ENCODE measurements at regions of chr4 and their contacts with region 1.

Region 1: DNA sequence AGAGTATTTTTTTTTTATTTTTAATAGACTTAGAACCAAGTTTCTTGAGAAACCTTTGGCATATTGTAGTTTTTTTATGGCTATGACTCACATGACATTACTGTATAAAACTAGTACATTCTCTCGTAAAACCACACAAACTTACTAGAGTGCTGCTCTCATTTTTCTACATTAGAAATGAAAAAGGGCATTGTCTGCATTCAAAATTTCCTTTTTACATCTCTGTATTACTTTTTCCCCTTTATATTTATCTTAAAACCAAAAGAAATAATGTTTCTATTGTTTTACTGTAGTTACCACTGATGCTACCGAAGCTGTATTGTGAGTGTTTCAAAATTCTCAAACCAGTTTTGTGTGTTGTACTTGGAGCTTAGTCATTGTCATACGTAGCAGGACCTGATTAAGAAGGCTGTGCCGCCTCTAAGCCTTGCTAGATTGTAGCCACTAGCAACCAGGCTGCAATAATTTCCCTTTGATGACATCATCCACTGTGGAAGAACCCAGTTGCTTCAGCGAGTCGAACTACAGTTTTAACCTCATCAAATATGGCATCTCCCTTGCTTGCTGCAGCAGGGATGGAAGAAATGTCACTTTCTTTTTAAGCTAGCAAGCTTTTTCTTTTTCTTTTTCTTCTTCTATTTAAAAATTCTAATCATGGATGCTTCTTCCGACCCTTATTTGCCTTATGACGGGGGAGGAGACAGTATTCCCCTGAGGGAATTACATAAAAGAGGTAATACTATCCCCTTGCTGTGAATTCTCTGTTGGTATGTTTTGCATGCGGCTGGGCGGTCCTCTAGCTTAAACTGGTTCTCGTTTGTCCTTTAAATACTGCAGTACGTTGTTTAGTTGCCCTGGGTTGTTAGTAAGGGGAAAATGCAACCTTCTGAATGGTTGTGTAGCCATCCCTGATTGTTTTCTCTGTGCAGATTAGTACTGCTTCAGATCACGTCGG is 39.6 kb downstream of the CLCN3 start:
- DNase-seq: peak; percentile 74
- ATAC-seq: peak; percentile 98
- H3K4me3 ChIP-seq: peak overlapping the region; percentile 56
- H3K27ac ChIP-seq: peak overlapping the region; percentile 78
- H3K4me1 ChIP-seq: peaks cover 3% of the 10 kb centered on the region
- H3K27me3 ChIP-seq: no peaks in the 10 kb centered on the region
- CTCF ChIP-seq: no peak
- EP300 ChIP-seq: no peak
- POLR2A ChIP-seq: 0 out of 2 replicates have a peak, but pooled peaks have one; percentile 36
- RAD21 ChIP-seq: no peak

Region 2: GRCh38 chr4:169619959-169620879 is 39.8 kb before region 1 on chr4 and contains the start of gene CLCN3:
- CTCF ChIA-PET with region 1: interaction called, 25 read pairs
- POLR2A ChIA-PET with region 1: interaction called, 26 read pairs
- RAD21 ChIA-PET with region 1: interaction called, 34 read pairs
- SMC1A ChIA-PET with region 1: interaction called, 28 read pairs
- in situ Hi-C with region 1: no loop called
- intact Hi-C with region 1: loop called (anchors 2 kb)
- DNase-seq: peak; percentile 93
- ATAC-seq: peak; percentile 93
- H3K4me3 ChIP-seq: peak within 1 kb of the TSS; percentile 90
- H3K27ac ChIP-seq: peak within 1 kb of the TSS; percentile 99
- H3K4me1 ChIP-seq: peaks cover 5% of the 10 kb centered on the region; the same call in 1 of the 2 replicates
- H3K27me3 ChIP-seq: no peaks in the 10 kb centered on the region
- CTCF ChIP-seq: no peak
- EP300 ChIP-seq: peak in 1 of 2 experiments; percentile 78; a peak in 3 of 4 replicates
- POLR2A ChIP-seq: peak; percentile 94
- RAD21 ChIP-seq: no peak
- polyA plus RNA-seq, gene CLCN3: 4.0 to 4.7 TPM

Region 3: DNA sequence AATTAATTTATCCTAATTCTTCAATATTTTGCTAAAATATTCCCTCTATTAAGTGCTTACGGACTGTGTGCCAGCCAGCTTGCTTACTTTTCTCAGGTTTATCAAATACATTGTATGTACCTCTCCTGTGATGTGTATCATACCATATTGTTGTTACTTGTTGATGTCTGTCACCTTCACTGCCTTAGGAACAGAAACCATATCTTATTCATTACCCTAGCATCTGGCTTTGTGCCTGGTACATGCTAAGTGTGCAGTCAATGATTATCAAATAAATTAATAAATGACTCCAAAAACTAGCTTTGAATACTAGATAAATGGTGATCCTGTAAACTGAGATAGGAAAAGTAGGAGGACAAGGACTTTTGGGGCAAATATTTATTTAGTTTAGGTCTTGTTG is 32.7 kb before region 1 on chr4:
- CTCF ChIA-PET with region 1: interaction called, 4 read pairs
- POLR2A ChIA-PET with region 1: interaction called, 26 read pairs
- RAD21 ChIA-PET with region 1: interaction called, 34 read pairs
- SMC1A ChIA-PET with region 1: interaction called, 28 read pairs
- in situ Hi-C with region 1: no loop called
- intact Hi-C with region 1: no loop called
- DNase-seq: no peak
- ATAC-seq: peak; percentile 45
- H3K4me3 ChIP-seq: no peak overlapping the region
- H3K27ac ChIP-seq: no peak overlapping the region
- H3K4me1 ChIP-seq: no peaks in the 10 kb centered on the region
- H3K27me3 ChIP-seq: no peaks in the 10 kb centered on the region
- CTCF ChIP-seq: no peak
- EP300 ChIP-seq: no peak
- POLR2A ChIP-seq: no peak
- RAD21 ChIP-seq: no peak

Region 4: GRCh38 chr4:169675825-169676224 is 15.8 kb after region 1 on chr4:
- CTCF ChIA-PET with region 1: interaction called, 5 read pairs
- POLR2A ChIA-PET with region 1: interaction called, 10 read pairs
- RAD21 ChIA-PET with region 1: interaction called, 35 read pairs
- SMC1A ChIA-PET with region 1: interaction called, 29 read pairs
- in situ Hi-C with region 1: no loop called
- intact Hi-C with region 1: no loop called
- DNase-seq: no peak
- ATAC-seq: peak; percentile 88
- H3K4me3 ChIP-seq: no peak overlapping the region
- H3K27ac ChIP-seq: no peak overlapping the region
- H3K4me1 ChIP-seq: no peaks in the 10 kb centered on the region
- H3K27me3 ChIP-seq: no peaks in the 10 kb centered on the region
- CTCF ChIP-seq: no peak
- EP300 ChIP-seq: no peak
- POLR2A ChIP-seq: no peak
- RAD21 ChIP-seq: no peak

Region 5: DNA sequence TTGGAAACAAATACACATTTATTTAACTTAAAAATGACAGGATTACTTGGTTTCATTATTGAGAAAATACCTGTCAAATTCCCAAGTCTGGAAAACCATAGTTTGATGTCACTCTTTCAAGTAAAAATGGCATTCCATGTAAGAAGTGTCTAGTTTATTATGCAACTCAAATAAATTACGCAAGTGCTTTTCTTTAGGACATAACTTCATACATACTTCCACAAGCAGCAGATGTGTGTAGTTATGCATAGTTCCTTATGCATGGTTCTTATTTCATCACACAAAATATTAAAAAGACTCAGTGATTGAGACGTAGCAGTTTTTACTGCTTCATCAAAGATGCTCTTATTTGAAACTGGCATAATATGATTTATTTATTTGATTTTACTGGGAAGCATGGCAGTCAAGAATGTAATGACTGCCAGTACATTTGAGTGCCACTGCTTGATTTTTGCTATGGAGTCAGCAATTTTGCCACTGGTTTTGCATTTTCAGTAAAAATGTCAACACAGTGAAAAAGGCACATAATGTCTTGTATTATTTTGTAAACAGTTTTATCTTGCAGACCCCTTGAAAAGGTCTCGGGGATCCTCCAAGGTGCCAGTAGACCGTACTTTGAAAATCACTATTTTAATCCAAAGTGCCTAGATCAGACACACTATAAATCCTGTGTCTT is 22.5 kb after region 1 on chr4:
- CTCF ChIA-PET with region 1: interaction called, 3 read pairs
- POLR2A ChIA-PET with region 1: interaction called, 10 read pairs
- RAD21 ChIA-PET with region 1: interaction called, 35 read pairs
- SMC1A ChIA-PET with region 1: interaction called, 11 read pairs
- in situ Hi-C with region 1: no loop called
- intact Hi-C with region 1: no loop called
- DNase-seq: no peak
- ATAC-seq: no peak
- H3K4me3 ChIP-seq: no peak overlapping the region
- H3K27ac ChIP-seq: no peak overlapping the region
- H3K4me1 ChIP-seq: no peaks in the 10 kb centered on the region
- H3K27me3 ChIP-seq: no peaks in the 10 kb centered on the region
- CTCF ChIP-seq: no peak
- EP300 ChIP-seq: no peak
- POLR2A ChIP-seq: no peak
- RAD21 ChIP-seq: no peak

Region 6: DNA sequence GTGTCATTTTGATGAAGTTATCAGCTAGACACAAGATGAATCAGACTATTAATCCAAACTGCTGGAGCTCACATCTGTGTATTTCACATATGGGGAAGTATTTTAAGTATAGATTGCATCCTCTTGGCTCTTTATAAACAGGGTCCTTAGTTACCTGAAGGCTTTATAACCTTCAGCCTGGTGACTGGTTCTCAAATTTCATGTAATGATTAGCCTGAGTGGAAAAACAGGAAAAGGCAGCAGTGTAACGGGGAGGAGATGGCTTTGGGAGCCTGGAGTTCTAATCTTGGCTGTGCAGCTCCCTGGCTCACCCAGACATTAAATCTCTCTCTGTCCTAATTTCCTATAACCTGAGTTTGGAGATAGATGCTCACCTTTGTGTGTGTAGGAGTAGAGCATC is 201.6 kb after region 1 on chr4:
- CTCF ChIA-PET with region 1: no interaction called
- POLR2A ChIA-PET with region 1: no interaction called
- RAD21 ChIA-PET with region 1: no interaction called
- SMC1A ChIA-PET with region 1: no interaction called
- in situ Hi-C with region 1: no loop called
- intact Hi-C with region 1: no loop called
- DNase-seq: no peak
- ATAC-seq: no peak
- H3K4me3 ChIP-seq: no peak overlapping the region
- H3K27ac ChIP-seq: no peak overlapping the region
- H3K4me1 ChIP-seq: no peaks in the 10 kb centered on the region
- H3K27me3 ChIP-seq: no peaks in the 10 kb centered on the region
- CTCF ChIP-seq: no peak
- EP300 ChIP-seq: no peak
- POLR2A ChIP-seq: no peak
- RAD21 ChIP-seq: no peak

Measured in GM12878 (cell line).